Ascending aorta (tissue), 2 donors: ENCODE measurements at regions of chr11 and their contacts with region 1.

Region 1: GRCh38 chr11:44911029-44911814 is 39.5 kb downstream of the TP53I11 start:
- DNase-seq: peak; percentile 51 to 94
- H3K4me3 ChIP-seq: no peak overlapping the region
- H3K27ac ChIP-seq: peak overlapping the region in 1 of 2 donors; percentile 26
- H3K4me1 ChIP-seq: peaks cover 0 to 11% of the 10 kb centered on the region in 2 donors
- H3K27me3 ChIP-seq: no peaks in the 10 kb centered on the region
- CTCF ChIP-seq: peak; percentile 77 to 85 (median 78)

Region 2: GRCh38 chr11:44556735-44557409 is 354.4 kb before region 1 on chr11:
- intact Hi-C with region 1: loop called (anchors 5 kb)
- DNase-seq: peak in 1 of 2 donors; percentile 80
- H3K4me3 ChIP-seq: no peak overlapping the region
- H3K27ac ChIP-seq: no peak overlapping the region
- H3K4me1 ChIP-seq: peaks cover 0 to 2% of the 10 kb centered on the region in 2 donors
- H3K27me3 ChIP-seq: no peaks in the 10 kb centered on the region
- CTCF ChIP-seq: peak; percentile 76 to 87 (median 83)

Region 3: GRCh38 chr11:44793350-44794090 is 117.7 kb before region 1 on chr11:
- intact Hi-C with region 1: no loop called
- DNase-seq: no peak
- H3K4me3 ChIP-seq: no peak overlapping the region
- H3K27ac ChIP-seq: no peak overlapping the region
- H3K4me1 ChIP-seq: peaks cover 0 to 5% of the 10 kb centered on the region in 2 donors
- H3K27me3 ChIP-seq: no peaks in the 10 kb centered on the region
- CTCF ChIP-seq: no peak

Region 4: GRCh38 chr11:45102810-45103621 is 191.8 kb after region 1 on chr11:
- intact Hi-C with region 1: no loop called
- DNase-seq: peak in 1 of 2 donors; percentile 75
- H3K4me3 ChIP-seq: no peak overlapping the region
- H3K27ac ChIP-seq: no peak overlapping the region
- H3K4me1 ChIP-seq: peaks cover 3% of the 10 kb centered on the region in 2 donors
- H3K27me3 ChIP-seq: peaks cover 5% of the 10 kb centered on the region
- CTCF ChIP-seq: peak; percentile 96 to 99 (median 96)